Motor neuron (in vitro differentiated cells): ENCODE measurements at regions of chr6 and their contacts with region 1.

Region 1: GRCh38 chr6:90478789-90479602 is 107.9 kb downstream of the MAP3K7 start:
- ATAC-seq: peak; percentile 97 to 100 (median 100)
- H3K4me3 ChIP-seq: no peak overlapping the region
- H3K27ac ChIP-seq: no peak overlapping the region
- H3K4me1 ChIP-seq: peaks cover 4 to 11% of the 10 kb centered on the region in 2 donors

Region 2: DNA sequence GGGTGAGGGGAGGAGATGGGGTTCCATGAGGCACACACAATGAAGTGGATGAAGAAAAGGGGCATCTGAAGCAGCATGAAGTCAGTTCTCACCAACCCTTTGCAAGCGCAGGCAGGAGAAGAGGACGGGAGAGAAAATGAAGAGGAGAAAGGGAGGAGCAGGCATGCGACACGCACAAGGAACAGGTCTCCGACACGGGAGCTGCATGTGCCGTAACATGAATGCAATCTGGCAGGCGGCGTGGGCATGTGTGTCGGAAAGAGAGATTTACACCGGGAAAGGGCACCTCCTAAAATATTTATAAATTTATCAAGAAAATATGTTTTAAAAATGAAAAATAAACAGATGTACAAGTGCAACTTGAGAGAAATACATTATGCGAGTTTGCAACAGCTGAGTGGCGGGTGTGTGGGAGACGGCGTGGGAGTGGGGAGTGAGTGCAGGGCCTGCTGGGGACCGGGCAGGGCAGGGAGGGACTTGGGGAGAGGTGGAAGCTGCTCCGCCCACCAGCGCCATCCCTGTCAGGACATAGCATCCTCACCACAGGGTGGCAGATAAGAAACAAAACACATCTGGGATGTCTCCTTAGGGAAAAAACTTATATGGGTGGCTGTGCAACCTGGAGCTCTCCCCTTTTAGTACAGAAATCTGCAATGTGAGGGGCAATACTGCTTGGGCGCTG is 544.2 kb before region 1 on chr6:
- in situ Hi-C with region 1: loop called in 7 of 9 experiments (anchors 10 to 25 kb)
- ATAC-seq: no peak
- H3K4me3 ChIP-seq: no peak overlapping the region
- H3K27ac ChIP-seq: no peak overlapping the region
- H3K4me1 ChIP-seq: no peaks in the 10 kb centered on the region

Region 3: DNA sequence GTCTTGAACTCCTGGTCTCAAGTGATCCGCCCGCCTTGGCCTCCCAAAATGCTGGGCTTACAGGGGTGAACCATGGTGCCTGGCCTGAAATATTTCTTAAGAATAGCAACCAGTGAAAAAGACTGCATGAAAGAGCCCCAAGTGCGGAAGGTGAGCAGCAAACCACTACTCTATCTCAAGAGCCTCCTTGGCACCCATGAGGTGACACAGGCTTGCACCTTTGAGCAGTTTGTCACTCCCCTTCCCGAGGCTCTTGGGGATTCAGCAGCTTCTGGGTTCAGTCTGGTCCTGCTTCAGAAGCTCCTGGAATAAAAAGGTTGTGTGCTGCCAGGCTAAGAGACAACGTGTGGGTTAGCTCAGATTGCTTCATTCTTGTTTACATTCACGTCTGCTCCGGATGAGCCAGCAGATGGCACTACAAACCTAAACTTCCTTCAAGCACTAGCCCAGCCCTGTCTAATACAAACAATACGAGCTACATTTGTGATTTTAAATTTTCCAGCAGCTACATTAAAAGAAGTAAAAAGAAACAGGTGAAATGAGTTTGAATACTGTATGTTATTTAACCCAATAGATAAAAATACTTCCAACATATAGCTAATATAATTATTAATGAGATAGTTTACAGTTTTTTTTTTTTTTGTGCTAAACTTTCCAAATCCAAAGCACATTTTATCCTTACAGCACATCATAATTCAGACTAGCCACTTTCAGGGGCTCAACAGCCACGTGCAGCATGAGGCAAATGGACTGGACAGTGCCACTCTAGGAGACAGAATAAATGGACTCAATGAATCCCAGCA is 538.6 kb before region 1 on chr6:
- in situ Hi-C with region 1: loop called in 7 of 9 experiments (anchors 10 to 25 kb)
- ATAC-seq: peak; percentile 81 to 100 (median 96)
- H3K4me3 ChIP-seq: no peak overlapping the region
- H3K27ac ChIP-seq: peak overlapping the region in 1 of 2 donors; percentile 59
- H3K4me1 ChIP-seq: peaks cover 12 to 15% of the 10 kb centered on the region in 2 donors

Region 4: DNA sequence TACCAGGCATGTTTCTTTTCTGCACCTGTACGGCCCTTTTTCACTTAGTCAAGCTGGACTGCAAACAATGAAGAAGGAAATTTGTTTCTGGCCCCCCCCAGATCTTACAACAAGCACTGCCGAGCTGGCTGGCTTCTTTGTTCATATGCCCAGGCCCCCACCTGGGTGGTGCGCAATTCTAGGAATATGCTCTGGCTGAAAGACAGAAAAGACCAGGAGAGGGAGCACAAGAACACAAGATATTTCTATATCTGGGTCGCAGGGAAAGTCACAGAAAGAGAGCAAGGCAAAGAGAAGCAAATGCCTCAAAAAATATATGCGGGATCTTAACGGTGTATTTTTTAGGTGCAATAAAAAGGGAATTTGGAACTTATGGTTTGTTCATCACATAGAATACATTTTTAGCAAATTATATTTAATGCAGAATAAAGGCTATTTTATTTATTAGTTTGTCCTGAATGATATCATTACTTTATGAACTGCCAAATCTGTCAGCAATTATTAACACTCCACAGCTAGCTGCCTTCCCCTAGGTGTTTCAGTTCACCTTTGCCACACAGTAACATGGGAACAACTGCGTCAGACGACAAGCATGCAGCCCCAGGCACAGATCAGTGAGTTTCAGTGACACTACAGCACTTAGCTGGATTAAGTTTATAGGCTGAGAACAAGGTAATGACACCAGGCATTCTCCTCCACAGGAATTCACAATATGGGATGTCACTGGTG is 508.2 kb before region 1 on chr6:
- in situ Hi-C with region 1: loop called in 1 of 9 experiments (anchors 25 kb)
- ATAC-seq: peak; percentile 50 to 88 (median 80)
- H3K4me3 ChIP-seq: no peak overlapping the region
- H3K27ac ChIP-seq: no peak overlapping the region
- H3K4me1 ChIP-seq: peaks cover 28 to 38% of the 10 kb centered on the region in 2 donors

Region 5: DNA sequence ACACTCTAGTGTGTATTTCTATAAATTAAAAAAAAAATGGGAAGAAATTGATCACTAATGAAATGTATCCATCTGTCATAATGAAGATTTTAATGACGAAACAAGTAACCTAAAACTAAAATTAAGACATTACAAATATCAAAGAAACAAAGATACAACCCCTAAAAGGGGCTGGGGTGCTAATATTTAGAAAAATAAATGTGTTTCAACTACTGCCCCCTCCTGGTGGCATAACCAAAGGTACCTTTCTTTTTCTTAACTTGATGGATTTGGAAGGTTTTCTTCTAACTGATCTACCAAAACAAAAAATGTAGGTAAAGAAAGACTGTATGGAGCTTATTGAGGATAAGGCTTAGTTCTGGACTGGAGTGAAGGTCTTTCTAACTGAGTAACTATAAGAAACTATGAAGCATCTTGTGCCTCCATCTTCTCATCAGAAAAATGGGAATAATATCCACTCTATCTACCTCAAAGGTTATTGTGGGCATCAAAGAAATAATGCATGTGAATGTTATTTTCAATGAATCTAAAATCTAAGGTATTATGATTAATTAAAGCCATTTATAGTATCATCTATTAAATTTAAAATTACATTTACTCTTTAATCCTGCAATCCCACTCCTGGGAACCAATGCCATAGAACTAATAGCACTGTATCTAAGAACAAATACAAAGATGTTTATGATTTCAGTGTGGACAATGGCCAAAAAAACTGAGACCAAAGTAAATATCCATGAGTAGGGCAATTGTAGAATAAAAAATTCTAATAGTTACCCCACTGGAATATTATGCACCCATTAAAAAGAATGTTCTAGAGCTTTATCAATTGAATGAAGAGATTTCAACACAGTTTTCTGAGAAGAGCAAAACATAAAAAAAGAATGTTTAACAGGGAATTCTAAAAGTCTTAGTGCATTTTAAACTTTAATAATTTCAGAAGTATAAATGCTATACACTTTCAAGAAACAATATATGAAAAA is 299.5 kb before region 1 on chr6:
- in situ Hi-C with region 1: no loop called
- ATAC-seq: no peak
- H3K4me3 ChIP-seq: no peak overlapping the region
- H3K27ac ChIP-seq: no peak overlapping the region
- H3K4me1 ChIP-seq: peaks cover 6 to 16% of the 10 kb centered on the region in 2 donors

Region 6: GRCh38 chr6:90285611-90286381 is 193.2 kb before region 1 on chr6:
- in situ Hi-C with region 1: loop called in 3 of 9 experiments (anchors 10 to 25 kb)
- ATAC-seq: peak; percentile 94 to 99 (median 95)
- H3K4me3 ChIP-seq: no peak overlapping the region
- H3K27ac ChIP-seq: no peak overlapping the region
- H3K4me1 ChIP-seq: peaks cover 36 to 48% of the 10 kb centered on the region in 2 donors

Region 7: DNA sequence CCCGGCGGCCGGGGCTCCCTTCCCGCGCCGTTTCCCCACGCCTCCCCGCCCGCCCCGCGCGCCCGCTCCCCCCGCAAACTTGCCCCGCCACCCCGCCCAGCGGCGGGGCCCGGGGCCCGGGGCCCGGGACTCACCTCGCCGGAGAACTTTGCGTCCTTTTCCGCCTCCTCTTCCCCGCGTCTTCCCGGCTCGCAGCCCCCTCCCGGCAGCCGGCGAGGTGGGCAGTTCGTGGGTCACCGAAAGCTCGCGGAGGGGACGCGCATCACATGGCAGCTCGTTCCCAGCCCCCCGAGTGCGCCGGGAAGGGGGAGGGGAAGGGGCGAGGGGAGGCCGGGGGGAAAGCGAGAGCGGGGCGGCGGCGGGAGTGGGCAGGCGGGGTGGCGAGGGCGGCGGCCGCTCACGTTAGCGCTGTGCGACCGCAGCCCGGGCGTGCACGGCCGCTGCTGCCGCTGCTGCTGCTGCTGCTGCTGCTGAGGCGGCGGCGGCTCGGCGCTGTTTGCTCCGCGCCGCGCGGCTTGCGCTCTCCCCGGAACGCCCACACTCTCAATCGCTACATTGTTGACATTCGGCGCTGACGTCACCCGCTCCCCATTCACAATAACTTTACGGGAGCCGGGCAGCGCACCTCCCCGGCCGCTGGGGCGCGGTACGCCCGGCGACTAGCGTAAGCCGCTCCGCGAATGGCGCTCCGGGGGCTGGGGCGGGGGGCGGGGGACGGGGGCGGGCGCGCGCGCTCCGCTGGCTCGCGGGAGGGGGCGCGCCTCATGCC is 182.5 kb before region 1 on chr6 and contains the start of gene BACH2:
- in situ Hi-C with region 1: loop called in 2 of 9 experiments (anchors 10 to 25 kb)
- ATAC-seq: peak; percentile 76 to 86 (median 80)
- H3K4me3 ChIP-seq: peak within 1 kb of the TSS; percentile 55 to 96 (median 85)
- H3K27ac ChIP-seq: peak within 1 kb of the TSS; percentile 79 to 94
- H3K4me1 ChIP-seq: peaks cover 29 to 45% of the 10 kb centered on the region in 2 donors
- total RNA-seq, gene BACH2: 0.25 to 34.3 (median 19.4) TPM

Region 8: GRCh38 chr6:90403489-90404381 is 75.3 kb before region 1 on chr6:
- in situ Hi-C with region 1: loop called in 1 of 9 experiments (anchors 10 kb)
- ATAC-seq: peak; percentile 11 to 92 (median 43)
- H3K4me3 ChIP-seq: no peak overlapping the region
- H3K27ac ChIP-seq: no peak overlapping the region
- H3K4me1 ChIP-seq: peaks cover 7 to 9% of the 10 kb centered on the region in 2 donors